ENCODE measurements at regions of chr1 and their contacts with region 1.

Region 1: DNA sequence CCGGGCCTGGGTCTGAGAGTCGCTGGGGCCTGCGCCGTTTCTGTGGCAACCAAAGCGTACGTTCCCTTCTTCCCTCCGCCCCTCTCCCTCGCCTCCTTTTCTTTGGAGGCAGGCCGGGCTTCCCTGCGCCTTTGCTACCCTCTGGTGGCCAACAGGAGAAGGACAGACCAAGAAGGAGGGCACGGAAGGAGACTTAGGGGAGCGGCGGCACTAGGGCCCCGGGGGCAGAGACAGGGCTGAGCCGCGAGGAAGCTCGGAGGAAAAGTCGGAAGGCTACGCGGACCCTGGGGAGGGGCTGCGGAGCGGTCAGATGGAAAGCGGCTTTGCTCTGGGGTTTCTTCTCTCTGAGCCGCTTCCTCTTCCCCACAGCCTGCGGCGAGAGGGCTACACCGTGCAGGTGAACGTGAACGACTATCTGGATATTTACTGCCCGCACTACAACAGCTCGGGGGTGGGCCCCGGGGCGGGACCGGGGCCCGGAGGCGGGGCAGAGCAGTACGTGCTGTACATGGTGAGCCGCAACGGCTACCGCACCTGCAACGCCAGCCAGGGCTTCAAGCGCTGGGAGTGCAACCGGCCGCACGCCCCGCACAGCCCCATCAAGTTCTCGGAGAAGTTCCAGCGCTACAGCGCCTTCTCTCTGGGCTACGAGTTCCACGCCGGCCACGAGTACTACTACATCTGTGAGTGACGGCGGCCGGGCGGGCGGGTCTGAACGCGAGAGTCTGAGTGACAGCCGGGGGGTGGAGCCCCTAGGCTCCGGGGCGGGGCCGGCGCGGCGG is 6.3 kb downstream of the EFNA3 start:
- DNase-seq: peak; percentile 96
- ATAC-seq: peak; percentile 86
- H3K4me3 Mint-ChIP-seq: peak overlapping the region; percentile 91
- H3K27ac Mint-ChIP-seq: peak overlapping the region; percentile 95
- H3K4me1 Mint-ChIP-seq: peaks cover 41% of the 10 kb centered on the region
- H3K27me3 Mint-ChIP-seq: peaks cover 28% of the 10 kb centered on the region

Region 2: DNA sequence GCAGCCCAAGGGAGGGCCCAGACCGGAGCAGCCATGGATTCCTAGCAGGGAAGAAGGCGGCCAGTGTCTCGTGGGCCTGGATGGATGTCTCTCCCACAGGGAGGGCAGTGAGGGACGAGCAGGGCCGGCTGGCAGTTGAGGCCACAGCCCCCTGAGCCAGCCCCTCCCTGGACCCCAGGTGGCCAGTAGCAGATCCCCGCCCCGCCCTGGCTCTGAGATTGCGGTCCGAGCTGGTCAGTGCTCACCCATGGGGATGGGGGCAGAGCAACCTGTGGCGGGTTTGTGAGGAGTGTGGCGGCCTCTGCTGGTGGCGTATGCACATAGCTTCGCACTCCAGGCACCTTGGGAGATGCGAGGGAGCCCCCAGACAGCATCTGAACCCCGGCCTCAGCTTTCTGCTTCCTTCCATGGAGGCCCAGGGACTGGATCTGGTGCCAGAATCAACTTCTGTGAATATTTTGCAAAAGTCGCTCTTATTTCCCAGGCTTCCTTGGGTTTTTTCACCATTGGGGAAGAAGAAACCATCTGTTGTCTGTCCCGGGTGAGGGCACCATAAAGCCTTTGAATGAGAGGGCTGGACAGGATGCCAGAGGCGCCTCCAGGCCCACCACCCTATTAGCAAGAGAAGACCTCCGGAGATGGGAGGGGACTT is 206.4 kb before region 1 on chr1:
- CTCF ChIA-PET with region 1: no interaction called
- POLR2A ChIA-PET with region 1: no interaction called
- DNase-seq: peak; percentile 78
- ATAC-seq: peak; percentile 92
- H3K4me3 Mint-ChIP-seq: no peak overlapping the region
- H3K27ac Mint-ChIP-seq: no peak overlapping the region
- H3K4me1 Mint-ChIP-seq: no peaks in the 10 kb centered on the region
- H3K27me3 Mint-ChIP-seq: peaks cover 2% of the 10 kb centered on the region

Region 3: DNA sequence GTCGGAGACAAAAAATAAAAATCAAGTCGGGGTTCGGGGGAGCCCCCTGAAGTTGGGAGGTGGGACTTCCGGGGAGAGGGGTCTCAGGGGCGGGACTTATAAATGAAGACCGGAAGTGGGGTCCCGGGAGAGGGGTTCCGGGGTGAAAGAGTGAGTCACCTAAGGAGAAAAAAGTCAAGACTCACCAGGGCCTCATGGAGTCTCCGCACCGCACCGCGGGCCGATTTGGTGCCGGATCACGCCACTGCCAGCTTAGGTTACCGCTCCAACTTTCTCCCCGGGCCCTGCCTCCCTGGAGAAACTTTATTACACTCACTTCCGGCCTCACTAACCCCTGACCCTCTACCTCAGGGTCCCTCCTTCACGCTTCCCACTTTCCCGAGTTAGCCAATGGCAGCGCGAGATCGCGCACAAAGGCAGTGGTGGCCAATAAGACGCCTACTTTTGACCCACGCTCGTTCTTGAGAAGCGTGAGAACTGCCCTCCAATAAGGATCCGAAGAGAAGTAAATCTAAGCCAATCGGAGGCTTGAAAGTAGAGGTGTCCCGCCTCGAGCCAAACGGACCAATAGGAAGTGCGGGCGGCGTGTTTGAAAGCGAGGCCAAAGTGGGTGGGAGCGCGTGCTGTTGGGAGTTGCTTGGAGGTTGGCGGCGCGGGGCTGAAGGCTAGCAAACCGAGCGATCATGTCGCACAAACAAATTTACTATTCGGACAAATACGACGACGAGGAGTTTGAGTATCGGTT is 110.7 kb before region 1 on chr1 and contains the start of gene CKS1B:
- CTCF ChIA-PET with region 1: interaction called, 18 read pairs
- POLR2A ChIA-PET with region 1: no interaction called
- DNase-seq: peak; percentile 98
- ATAC-seq: peak; percentile 91
- H3K4me3 Mint-ChIP-seq: no peak within 1 kb of the TSS
- H3K27ac Mint-ChIP-seq: no peak within 1 kb of the TSS
- H3K4me1 Mint-ChIP-seq: peaks cover 40% of the 10 kb centered on the region
- H3K27me3 Mint-ChIP-seq: no peaks in the 10 kb centered on the region
- total RNA-seq, gene CKS1B: 151 to 153 TPM

Region 4: GRCh38 chr1:155044812-155045690 is 39.9 kb before region 1 on chr1:
- CTCF ChIA-PET with region 1: interaction called, 48 read pairs
- POLR2A ChIA-PET with region 1: no interaction called
- DNase-seq: peak; percentile 81
- ATAC-seq: peak; percentile 96
- H3K4me3 Mint-ChIP-seq: no peak overlapping the region
- H3K27ac Mint-ChIP-seq: peak overlapping the region; percentile 47
- H3K4me1 Mint-ChIP-seq: peaks cover 18% of the 10 kb centered on the region
- H3K27me3 Mint-ChIP-seq: peaks cover 6% of the 10 kb centered on the region

Region 5: GRCh38 chr1:155063550-155064110 is 21.3 kb before region 1 on chr1 and contains the start of gene EFNA4:
- CTCF ChIA-PET with region 1: interaction called, 201 read pairs
- POLR2A ChIA-PET with region 1: interaction called, 3 read pairs
- DNase-seq: peak; percentile 90
- ATAC-seq: peak; percentile 85
- H3K4me3 Mint-ChIP-seq: peak within 1 kb of the TSS; percentile 89
- H3K27ac Mint-ChIP-seq: peak within 1 kb of the TSS; percentile 51
- H3K4me1 Mint-ChIP-seq: peaks cover 41% of the 10 kb centered on the region
- H3K27me3 Mint-ChIP-seq: no peaks in the 10 kb centered on the region
- total RNA-seq, gene EFNA4: 7.8 to 9.7 TPM

Region 6: DNA sequence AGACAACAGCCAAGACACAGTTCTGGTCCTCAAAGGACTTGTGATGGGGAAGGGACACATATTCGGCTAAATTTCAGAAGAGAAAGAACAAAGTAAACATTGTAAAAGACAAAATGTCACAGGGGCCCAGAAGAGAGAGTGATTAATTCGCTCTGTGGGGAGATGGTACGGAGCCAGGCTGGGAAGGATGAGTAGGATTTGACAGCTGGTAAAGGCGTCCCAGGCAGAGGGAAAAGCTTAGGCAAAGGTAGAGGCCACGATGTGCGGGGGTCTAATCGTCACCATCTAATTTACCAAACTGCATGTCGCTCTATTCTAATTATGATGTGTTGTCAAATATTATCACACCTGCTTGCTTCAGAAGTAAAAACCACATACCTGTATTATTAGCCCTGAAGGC is 25.5 kb after region 1 on chr1:
- CTCF ChIA-PET with region 1: no interaction called
- POLR2A ChIA-PET with region 1: no interaction called
- DNase-seq: no peak
- ATAC-seq: no peak
- H3K4me3 Mint-ChIP-seq: no peak overlapping the region
- H3K27ac Mint-ChIP-seq: no peak overlapping the region
- H3K4me1 Mint-ChIP-seq: no peaks in the 10 kb centered on the region
- H3K27me3 Mint-ChIP-seq: peaks cover 5% of the 10 kb centered on the region

Region 7: GRCh38 chr1:155127105-155127964 is 42.4 kb after region 1 on chr1 and contains the start of gene EFNA1:
- CTCF ChIA-PET with region 1: interaction called, 14 read pairs
- POLR2A ChIA-PET with region 1: no interaction called
- DNase-seq: peak; percentile 39
- ATAC-seq: peak; percentile 85
- H3K4me3 Mint-ChIP-seq: peak within 1 kb of the TSS; percentile 68
- H3K27ac Mint-ChIP-seq: no peak within 1 kb of the TSS
- H3K4me1 Mint-ChIP-seq: peaks cover 30% of the 10 kb centered on the region
- H3K27me3 Mint-ChIP-seq: peaks cover 50% of the 10 kb centered on the region
- total RNA-seq, gene EFNA1: not detected

Region 8: GRCh38 chr1:155172732-155173477 is 88.0 kb after region 1 on chr1 and contains the start of gene KRTCAP2:
- CTCF ChIA-PET with region 1: interaction called, 166 read pairs
- POLR2A ChIA-PET with region 1: interaction called, 3 read pairs
- DNase-seq: peak; percentile 97
- ATAC-seq: peak; percentile 84
- H3K4me3 Mint-ChIP-seq: peak within 1 kb of the TSS; percentile 96
- H3K27ac Mint-ChIP-seq: peak within 1 kb of the TSS; percentile 98
- H3K4me1 Mint-ChIP-seq: peaks cover 52% of the 10 kb centered on the region
- H3K27me3 Mint-ChIP-seq: no peaks in the 10 kb centered on the region
- total RNA-seq, gene KRTCAP2: 170 to 190 TPM

Measured in activated CD8-positive, alpha-beta T cell treated with anti-CD3 and anti-CD28 coated beads, Interleukin-2, amount 10 ng/mL, durations not matched to agents 7 days and 5 days (primary cell).